ENCODE measurements at regions of chr5 and their contacts with region 1.

Region 1: DNA sequence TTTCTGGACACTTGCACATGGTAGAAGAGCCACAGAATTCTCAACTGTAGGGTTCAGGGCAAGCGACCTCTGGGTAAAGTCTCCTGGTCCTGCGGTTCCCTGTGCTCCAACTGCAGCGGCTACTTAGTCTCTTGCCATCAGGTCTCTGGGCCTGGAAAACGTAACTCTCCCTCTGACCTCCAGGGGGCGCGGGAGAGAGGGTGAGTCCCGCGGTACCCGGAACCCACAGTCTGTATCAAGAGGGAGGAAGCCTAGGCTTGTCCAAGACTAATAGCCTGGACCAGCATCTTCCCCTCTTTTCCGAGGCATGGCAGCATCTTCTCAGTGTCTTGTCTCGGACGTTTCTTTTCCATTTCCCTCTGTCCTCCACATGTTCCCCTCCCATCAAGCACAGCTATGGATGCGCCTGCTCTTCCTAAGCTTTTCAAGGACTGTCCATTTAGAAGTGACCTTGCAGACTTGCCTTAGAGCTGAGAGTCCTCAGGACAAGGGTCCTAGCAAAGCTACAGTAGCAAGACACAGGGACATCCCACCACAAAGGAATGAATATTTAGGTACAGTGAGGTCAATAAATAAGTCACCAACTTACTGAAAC is 59.3 kb downstream of the FSTL4 start:
- DNase-seq: peak; percentile 20 to 65 (median 32)
- ATAC-seq: peak; percentile 70
- H3K4me3 ChIP-seq: no peak overlapping the region
- H3K4me3 Mint-ChIP-seq: no peak overlapping the region
- H3K27ac ChIP-seq: no peak overlapping the region
- H3K27ac Mint-ChIP-seq: no peak overlapping the region
- H3K4me1 ChIP-seq: no peaks in the 10 kb centered on the region
- H3K4me1 Mint-ChIP-seq: peaks cover 0 to 3% (median 0%) of the 10 kb centered on the region in 7 donors
- H3K27me3 ChIP-seq: no peaks in the 10 kb centered on the region
- H3K27me3 Mint-ChIP-seq: peaks cover 24 to 57% (median 43%) of the 10 kb centered on the region in 5 donors

Region 2: DNA sequence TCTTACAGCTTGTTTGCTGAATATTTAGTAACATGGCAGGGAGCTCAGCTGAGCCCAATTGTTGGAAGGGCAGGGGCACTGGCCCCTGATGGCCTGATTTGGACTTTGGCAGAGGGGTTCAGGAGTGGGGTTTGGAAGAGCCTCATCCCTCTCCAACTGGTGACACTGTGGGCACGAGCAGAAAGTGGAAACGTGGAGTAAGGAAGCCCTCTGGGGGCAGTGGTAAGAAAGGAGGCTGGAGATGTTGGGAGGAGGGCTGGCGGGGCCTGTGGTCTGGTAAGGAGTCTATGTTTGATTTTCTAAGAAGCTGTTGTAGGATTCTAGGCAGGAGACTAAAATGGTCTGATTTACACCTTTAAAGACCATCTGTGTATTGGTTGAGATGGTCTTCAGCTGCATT is 292.3 kb before region 1 on chr5:
- CTCF ChIA-PET with region 1: no interaction called
- POLR2A ChIA-PET with region 1: no interaction called
- intact Hi-C with region 1: no loop called
- DNase-seq: no peak
- ATAC-seq: no peak
- H3K4me3 ChIP-seq: no peak overlapping the region
- H3K4me3 Mint-ChIP-seq: peak overlapping the region in 3 of 10 donors; percentile 27 to 74 (median 38)
- H3K27ac ChIP-seq: no peak overlapping the region
- H3K27ac Mint-ChIP-seq: peak overlapping the region in 2 of 9 donors; percentile 33 to 58
- H3K4me1 ChIP-seq: peaks cover 0 to 16% of the 10 kb centered on the region in 2 donors
- H3K4me1 Mint-ChIP-seq: peaks cover 12 to 31% (median 22%) of the 10 kb centered on the region in 7 donors
- H3K27me3 ChIP-seq: no peaks in the 10 kb centered on the region
- H3K27me3 Mint-ChIP-seq: peaks cover 0 to 6% (median 0%) of the 10 kb centered on the region in 5 donors

Region 3: GRCh38 chr5:133610489-133611356 is 57.7 kb after region 1 on chr5:
- CTCF ChIA-PET with region 1: no interaction called
- POLR2A ChIA-PET with region 1: no interaction called
- intact Hi-C with region 1: no loop called
- DNase-seq: peak in 5 of 9 donors; percentile 8 to 48 (median 16)
- ATAC-seq: peak; percentile 58
- H3K4me3 ChIP-seq: peak overlapping the region; percentile 50
- H3K4me3 Mint-ChIP-seq: peak overlapping the region; percentile 49 to 87 (median 72)
- H3K27ac ChIP-seq: no peak overlapping the region
- H3K27ac Mint-ChIP-seq: no peak overlapping the region
- H3K4me1 ChIP-seq: no peaks in the 10 kb centered on the region
- H3K4me1 Mint-ChIP-seq: peaks cover 0 to 21% (median 6%) of the 10 kb centered on the region in 7 donors
- H3K27me3 ChIP-seq: peaks cover 7 to 13% of the 10 kb centered on the region in 2 donors
- H3K27me3 Mint-ChIP-seq: peaks cover 58 to 75% (median 63%) of the 10 kb centered on the region in 5 donors

Region 4: GRCh38 chr5:133644000-133644865 is 91.2 kb after region 1 on chr5:
- CTCF ChIA-PET with region 1: no interaction called
- POLR2A ChIA-PET with region 1: no interaction called
- intact Hi-C with region 1: no loop called
- DNase-seq: no peak
- ATAC-seq: no peak
- H3K4me3 ChIP-seq: no peak overlapping the region
- H3K4me3 Mint-ChIP-seq: no peak overlapping the region
- H3K27ac ChIP-seq: no peak overlapping the region
- H3K27ac Mint-ChIP-seq: no peak overlapping the region
- H3K4me1 ChIP-seq: no peaks in the 10 kb centered on the region
- H3K4me1 Mint-ChIP-seq: no peaks in the 10 kb centered on the region
- H3K27me3 ChIP-seq: no peaks in the 10 kb centered on the region
- H3K27me3 Mint-ChIP-seq: peaks cover 0 to 53% (median 36%) of the 10 kb centered on the region in 5 donors

Region 5: DNA sequence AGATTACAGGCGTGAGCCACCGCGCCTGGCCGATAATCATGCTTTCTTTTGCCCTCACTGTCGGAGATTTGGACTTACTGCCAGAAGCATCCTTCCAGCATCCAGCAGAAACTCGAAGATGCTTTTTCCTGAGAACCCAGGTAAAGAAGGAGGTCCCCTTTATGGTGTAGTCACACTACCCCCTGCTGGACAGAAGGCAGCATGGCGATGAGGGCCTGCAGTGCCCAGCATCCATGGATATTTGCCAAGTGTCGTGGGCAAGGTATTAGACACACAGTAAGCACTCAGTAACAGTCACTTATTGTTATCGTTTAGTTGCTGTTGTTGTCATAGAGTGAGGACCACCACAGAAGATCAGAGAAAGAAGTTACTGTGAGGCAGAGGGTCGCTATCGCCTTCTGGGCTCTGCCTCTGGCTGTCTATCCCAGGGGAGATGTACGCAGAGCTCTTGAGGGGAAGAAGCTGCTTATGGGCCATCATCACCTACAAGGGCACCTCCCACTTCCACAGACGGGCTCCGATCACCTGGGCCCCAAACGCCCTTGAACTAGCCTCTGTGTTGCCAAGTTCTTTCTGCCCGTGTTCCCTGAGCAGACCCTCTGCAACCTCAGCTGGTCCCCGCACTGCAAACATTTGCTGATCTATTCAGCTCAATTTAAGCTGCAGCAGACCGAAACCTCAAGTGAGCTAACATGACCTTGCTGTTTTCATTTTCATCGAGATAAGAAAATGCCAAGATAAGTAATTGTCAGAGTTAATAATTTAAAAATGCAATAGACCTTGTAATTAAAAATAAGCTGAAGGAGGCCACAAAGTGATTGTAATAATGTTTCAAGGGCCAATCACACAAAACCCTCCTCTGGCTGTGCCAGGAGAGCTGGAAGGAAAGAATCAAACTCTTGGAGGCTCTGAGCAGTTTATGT is 391.5 kb after region 1 on chr5:
- CTCF ChIA-PET with region 1: no interaction called
- POLR2A ChIA-PET with region 1: no interaction called
- intact Hi-C with region 1: loop called in 1 of 2 experiments (anchors 1 kb)
- DNase-seq: peak in 4 of 9 donors; percentile 14 to 42 (median 18)
- ATAC-seq: peak; percentile 52
- H3K4me3 ChIP-seq: no peak overlapping the region
- H3K4me3 Mint-ChIP-seq: no peak overlapping the region
- H3K27ac ChIP-seq: no peak overlapping the region
- H3K27ac Mint-ChIP-seq: no peak overlapping the region
- H3K4me1 ChIP-seq: no peaks in the 10 kb centered on the region
- H3K4me1 Mint-ChIP-seq: peaks cover 0 to 8% (median 0%) of the 10 kb centered on the region in 7 donors
- H3K27me3 ChIP-seq: no peaks in the 10 kb centered on the region
- H3K27me3 Mint-ChIP-seq: peaks cover 0 to 9% (median 0%) of the 10 kb centered on the region in 5 donors